IMR-90 (cell line): ENCODE measurements at regions of chr5 and their contacts with region 1.

Region 1: DNA sequence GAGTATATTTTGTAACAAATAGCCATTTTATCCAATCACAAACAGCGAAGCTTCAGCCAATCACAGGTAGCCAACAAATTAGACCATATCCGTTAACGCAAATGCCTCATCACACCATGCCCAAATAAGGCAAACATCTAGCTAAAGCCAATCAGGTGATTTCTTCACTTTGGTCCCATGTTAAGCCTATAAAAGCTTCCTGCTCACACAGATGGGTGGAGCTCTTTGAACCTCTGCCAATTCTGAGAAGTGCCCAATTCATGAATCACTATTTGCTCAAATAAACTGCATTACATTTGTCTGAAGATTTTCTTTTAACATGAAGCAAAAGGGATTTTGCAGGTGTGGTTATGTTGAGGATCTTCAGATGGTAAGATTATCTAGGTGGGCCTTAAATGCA is 127.6 kb upstream of the TARS1 start:
- DNase-seq: peak; percentile 90
- ATAC-seq: no peak
- H3K4me3 ChIP-seq: no peak overlapping the region
- H3K27ac ChIP-seq: no peak overlapping the region
- H3K4me1 ChIP-seq: peaks cover 15% of the 10 kb centered on the region
- H3K27me3 ChIP-seq: no peaks in the 10 kb centered on the region
- CTCF ChIP-seq: no peak
- POLR2A ChIP-seq: no peak
- RAD21 ChIP-seq: no peak

Region 2: GRCh38 chr5:33415811-33416354 is 102.7 kb after region 1 on chr5:
- CTCF ChIA-PET with region 1: no interaction called
- POLR2A ChIA-PET with region 1: no interaction called
- dilution Hi-C with region 1: no loop called
- in situ Hi-C with region 1: no loop called
- intact Hi-C with region 1: loop called (anchors 5 kb)
- DNase-seq: peak; percentile 67
- ATAC-seq: peak; percentile 86
- H3K4me3 ChIP-seq: no peak overlapping the region
- H3K27ac ChIP-seq: no peak overlapping the region; the same call in 1 of the 2 replicates
- H3K4me1 ChIP-seq: no peaks in the 10 kb centered on the region; the same call in 1 of the 2 replicates
- H3K27me3 ChIP-seq: no peaks in the 10 kb centered on the region
- CTCF ChIP-seq: no peak
- POLR2A ChIP-seq: no peak
- RAD21 ChIP-seq: no peak